ENCODE measurements at regions of chr6 and their contacts with region 1.

Region 1: GRCh38 chr6:34657307-34657978 is 39.1 kb downstream of the ILRUN start:
- DNase-seq: peak in 2 of 35 experiments; percentile 7 to 60
- ATAC-seq: peak; percentile 31 to 42 (median 38)
- H3K4me3 ChIP-seq: peak overlapping the region; percentile 29 to 43
- H3K4me3 Mint-ChIP-seq: peak overlapping the region; percentile 78 to 83 (median 79)
- H3K27ac ChIP-seq: peak overlapping the region; percentile 88
- H3K27ac Mint-ChIP-seq: peak overlapping the region; percentile 95 to 98
- H3K4me1 ChIP-seq: peaks cover 16 to 28% of the 10 kb centered on the region in 2 experiments
- H3K4me1 Mint-ChIP-seq: peaks cover 56 to 67% (median 63%) of the 10 kb centered on the region in 3 donors
- H3K27me3 ChIP-seq: no peaks in the 10 kb centered on the region
- H3K27me3 Mint-ChIP-seq: no peaks in the 10 kb centered on the region

Region 2: DNA sequence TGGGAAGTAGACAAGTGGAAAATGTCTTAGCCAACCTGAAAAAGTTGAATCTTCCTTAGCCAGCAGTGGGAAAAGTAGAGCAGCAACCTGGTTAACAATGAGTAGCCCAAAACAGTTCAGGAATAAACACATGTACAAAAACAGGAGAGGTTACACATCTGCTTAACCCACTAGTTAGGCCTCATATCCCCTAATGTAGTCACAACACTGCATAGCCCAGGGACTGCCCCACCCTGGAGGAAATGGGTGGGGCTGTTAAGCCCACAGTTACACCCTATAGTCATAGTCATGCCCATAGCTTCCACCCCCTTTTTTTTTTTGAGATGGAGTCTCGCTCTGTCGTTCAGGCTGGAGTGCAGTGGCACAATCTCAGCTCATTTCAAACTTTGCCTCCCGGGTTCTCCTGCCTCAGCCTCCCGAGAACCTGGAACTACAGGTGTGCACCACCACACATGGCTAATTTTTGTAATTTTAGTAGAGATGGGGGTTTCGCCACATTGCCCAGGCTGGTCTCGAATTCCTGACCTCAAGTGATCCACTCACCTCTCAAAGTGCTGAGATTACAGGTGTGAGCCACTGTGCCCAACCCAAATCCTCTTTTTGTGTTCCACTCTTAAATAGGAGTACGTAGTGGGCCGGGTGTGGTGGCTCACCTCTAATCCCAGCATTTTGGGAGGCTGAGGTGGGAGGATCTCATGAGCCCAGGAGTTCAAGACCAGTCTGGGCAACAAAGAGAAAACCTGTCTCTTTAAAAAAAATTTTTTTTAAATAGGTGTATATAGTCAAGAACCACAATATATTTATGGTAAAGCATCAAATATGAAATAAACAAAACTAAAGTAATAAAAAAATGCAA is 14.6 kb after region 1 on chr6:
- CTCF ChIA-PET with region 1: interaction called, 4 to 5 read pairs
- POLR2A ChIA-PET with region 1: interaction called, 8 to 10 read pairs
- DNase-seq: peak; percentile 37 to 89 (median 74)
- ATAC-seq: peak; percentile 98 to 99 (median 98)
- H3K4me3 ChIP-seq: peak overlapping the region; percentile 11 to 23
- H3K4me3 Mint-ChIP-seq: peak overlapping the region; percentile 69 to 75 (median 73)
- H3K27ac ChIP-seq: peak overlapping the region; percentile 93
- H3K27ac Mint-ChIP-seq: peak overlapping the region; percentile 98 to 99
- H3K4me1 ChIP-seq: peaks cover 30 to 47% of the 10 kb centered on the region in 2 experiments
- H3K4me1 Mint-ChIP-seq: peaks cover 70 to 73% (median 72%) of the 10 kb centered on the region in 3 donors
- H3K27me3 ChIP-seq: no peaks in the 10 kb centered on the region
- H3K27me3 Mint-ChIP-seq: no peaks in the 10 kb centered on the region